G401 (cell line): ENCODE measurements at regions of chr15 and their contacts with region 1.

Region 1: DNA sequence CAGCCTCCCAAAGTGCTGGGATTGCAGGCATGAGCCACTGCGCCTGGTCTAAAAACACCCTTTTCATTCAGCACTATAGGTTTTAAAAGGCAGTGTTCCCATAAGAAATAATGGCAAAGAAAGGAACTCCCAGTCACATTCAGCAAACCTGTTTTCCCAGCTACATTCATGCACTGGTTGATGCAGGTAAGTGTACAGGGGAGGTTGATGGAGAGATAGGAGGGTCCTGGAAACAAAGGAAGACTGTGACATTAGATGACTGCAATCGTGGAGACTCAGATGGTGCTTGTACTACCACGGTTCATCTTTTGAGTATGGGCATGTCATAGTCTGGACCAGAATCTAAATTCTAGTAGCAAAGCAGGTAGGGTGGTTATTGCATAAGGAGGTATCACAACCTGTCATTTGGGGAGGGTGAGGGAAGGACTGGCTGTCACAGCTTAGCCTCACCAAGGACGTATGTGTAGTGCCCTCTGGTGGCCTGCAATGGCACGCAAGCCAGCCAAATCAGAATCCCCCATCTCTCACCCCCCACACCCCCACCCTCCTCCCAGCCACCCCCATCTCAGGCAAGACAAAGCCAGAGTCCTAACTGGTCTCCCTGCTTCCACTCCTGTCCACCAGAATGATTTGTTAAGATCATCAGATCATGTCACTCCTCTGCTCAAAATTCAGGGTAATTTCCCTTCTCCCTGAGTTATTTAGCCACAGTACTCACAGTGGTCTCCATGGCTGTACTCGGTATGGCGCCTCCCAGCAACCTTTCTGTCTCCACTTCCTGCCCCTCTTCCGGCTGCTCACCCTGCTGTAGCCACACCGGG is 28.8 kb upstream of the UBL7 start:
- DNase-seq: peak; percentile 85

Region 2: GRCh38 chr15:74373731-74374647 is 115.7 kb before region 1 on chr15:
- in situ Hi-C with region 1: loop called (anchors 10 kb)
- DNase-seq: peak; percentile 92

Region 3: DNA sequence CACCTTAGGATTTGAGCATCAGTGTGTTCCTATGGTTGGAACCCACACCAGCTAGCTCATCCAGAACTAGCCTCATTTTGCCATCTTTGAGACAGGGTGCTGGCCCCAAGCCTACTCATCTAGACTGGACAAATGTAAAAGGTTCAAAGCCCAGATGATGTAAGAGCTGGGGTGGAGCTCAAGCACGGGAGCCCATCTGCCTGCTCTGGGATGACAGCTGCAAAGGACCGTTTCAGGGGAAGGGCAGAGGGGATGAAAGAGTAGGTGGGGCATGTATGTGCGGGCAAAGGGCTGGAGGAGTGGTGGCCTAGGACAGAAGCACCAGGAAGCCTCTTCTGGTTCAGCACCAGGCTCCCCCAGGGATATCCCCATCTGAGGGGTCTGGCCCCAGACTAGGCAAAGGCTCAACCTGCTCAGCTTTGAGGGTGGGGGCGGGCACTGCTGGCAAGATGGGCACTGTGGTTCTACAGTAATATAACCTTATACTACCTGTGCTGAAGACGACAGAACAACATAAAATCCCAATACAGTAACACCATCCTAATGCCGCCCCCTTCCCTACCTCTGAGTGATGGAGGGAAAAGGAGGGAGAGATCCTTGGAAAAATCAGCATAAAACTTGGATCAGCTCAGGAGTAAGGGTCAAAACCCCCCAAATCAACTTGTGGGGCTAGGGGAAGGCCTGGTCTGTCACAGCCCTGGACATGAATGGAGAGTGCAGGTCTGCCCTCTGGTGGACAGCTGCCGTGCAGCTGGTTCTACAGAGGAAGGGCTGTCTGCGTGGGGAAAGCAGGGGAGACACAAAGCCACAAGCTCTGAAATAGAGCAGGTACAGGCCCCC is 141.9 kb after region 1 on chr15:
- in situ Hi-C with region 1: no loop called
- DNase-seq: peak; percentile 70